Mammary epithelial cell (primary cell): ENCODE measurements at regions of chr9 and their contacts with region 1.

Region 1: DNA sequence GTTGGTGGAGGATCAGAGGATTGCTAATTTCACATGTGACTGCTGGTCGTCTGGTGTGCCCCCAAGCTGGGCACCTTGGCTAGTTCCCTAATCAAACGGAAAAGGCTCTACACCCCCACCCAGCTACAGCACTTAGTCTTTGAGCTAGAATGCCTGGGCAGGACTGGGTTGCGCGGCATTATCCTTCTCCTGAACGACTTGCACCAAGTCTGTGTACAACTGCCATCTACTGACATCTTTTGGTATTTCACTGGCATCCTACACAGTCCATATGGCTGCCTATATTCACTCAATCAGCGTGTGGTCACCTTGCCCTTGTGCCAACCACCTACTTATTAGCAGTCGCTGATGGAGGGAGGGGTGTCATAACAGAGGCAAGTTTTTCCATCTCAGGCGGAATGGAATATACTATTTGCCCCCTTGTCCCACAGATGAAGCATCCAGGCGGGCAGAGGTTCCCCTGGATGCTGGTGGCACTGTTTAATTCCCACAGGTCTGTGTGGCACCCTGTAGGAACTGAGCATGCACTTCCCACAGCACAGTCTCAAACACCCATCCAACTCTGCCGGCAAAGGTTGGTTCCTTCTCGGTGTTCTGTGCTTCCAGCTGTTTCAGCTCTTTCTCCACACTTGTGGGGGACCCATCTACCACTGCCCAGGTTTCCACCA is 150.1 kb downstream of the OSTF1 start:
- DNase-seq: peak; percentile 71
- H3K4me3 ChIP-seq: no peak overlapping the region
- H3K27ac ChIP-seq: peak overlapping the region; percentile 12
- H3K4me1 ChIP-seq: peaks cover 20% of the 10 kb centered on the region
- H3K27me3 ChIP-seq: no peaks in the 10 kb centered on the region
- CTCF ChIP-seq: peak; percentile 73 to 75

Region 2: DNA sequence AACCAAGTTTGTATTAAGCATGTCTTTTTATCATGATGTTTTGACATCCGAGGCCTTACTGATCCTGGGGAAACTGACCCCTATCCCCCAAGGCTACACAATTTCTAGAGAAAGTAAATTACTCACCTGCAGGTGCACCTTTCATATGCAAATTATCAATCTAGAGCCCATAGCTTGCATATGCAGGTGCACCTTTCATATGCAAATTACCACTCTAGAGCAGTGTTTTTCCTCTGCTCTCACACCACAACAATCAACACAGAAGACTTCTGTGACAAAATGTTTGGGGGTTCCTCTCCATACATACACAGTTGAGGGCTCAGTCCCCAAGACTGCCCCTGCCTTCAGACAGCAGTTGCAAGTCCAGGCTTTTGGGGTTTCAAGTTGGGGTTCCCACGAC is 945.0 kb before region 1 on chr9:
- CTCF ChIA-PET with region 1: no interaction called
- dilution Hi-C with region 1: no loop called
- in situ Hi-C with region 1: no loop called
- intact Hi-C with region 1: no loop called
- DNase-seq: no peak
- H3K4me3 ChIP-seq: no peak overlapping the region
- H3K27ac ChIP-seq: no peak overlapping the region
- H3K4me1 ChIP-seq: no peaks in the 10 kb centered on the region
- H3K27me3 ChIP-seq: peaks cover 2% of the 10 kb centered on the region
- CTCF ChIP-seq: no peak

Region 3: DNA sequence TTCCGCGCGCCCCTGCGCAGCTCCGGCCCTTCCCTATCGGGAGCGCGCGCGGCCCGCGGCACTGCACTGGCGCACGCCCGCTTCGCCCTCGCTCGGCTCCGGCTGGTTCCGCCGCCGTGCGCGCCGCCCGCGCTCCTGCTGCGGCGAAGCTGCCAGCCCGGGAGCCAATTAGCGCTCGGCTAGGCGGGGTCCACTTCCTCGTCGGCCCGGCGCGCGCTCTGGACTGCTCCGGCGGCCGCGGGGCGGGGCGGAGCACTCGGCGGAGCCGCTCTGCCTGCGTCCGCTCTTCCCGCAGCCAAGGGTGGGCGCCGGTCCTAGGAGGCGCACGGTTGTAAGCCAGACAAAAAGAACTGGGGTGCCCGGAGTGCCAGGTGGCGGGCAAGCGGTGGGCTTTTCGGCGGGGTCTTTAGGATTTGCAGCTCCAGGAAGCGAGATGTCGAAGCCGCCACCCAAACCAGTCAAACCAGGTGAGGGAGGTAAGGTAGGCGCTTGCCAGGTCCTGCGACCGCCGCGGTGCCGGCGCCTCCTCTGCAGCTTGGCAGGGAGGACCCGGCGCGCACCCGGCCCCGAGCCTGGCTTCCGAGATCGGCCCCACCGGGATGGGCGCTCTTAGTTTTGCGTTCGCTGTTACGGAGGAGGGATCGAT is 150.1 kb before region 1 on chr9 and contains the start of gene OSTF1:
- CTCF ChIA-PET with region 1: no interaction called
- dilution Hi-C with region 1: no loop called
- in situ Hi-C with region 1: no loop called
- intact Hi-C with region 1: loop called (anchors 2 kb)
- DNase-seq: peak; percentile 97
- H3K4me3 ChIP-seq: peak within 1 kb of the TSS; percentile 95 to 96 (median 96)
- H3K27ac ChIP-seq: peak within 1 kb of the TSS; percentile 92
- H3K4me1 ChIP-seq: peaks cover 29% of the 10 kb centered on the region
- H3K27me3 ChIP-seq: no peaks in the 10 kb centered on the region
- CTCF ChIP-seq: no peak
- total RNA-seq, gene OSTF1: 31.8 to 53.1 TPM